ENCODE measurements at regions of chr16 and their contacts with region 1.

Region 1: DNA sequence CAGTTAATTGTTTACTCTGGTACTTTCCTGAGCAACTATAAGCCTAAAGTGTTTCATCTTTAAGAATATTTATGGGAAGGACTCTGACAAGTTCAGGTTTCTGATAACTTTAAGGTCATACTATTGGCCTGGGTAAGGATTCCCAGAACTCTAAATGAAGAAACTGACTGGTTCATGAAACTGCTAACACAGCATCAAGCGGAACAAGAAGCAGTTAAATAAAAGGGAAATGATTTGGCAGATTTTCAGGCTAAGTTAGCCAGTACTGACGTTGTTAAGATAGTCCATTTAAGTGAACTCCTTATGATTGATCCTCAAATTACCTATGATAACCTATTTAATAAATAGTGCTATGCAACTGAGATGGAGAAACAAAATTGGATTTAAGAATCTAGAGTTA is 101.6 kb upstream of the CES5A start:
- DNase-seq: no peak
- H3K4me3 ChIP-seq: no peak overlapping the region
- H3K27ac ChIP-seq: no peak overlapping the region
- H3K4me1 ChIP-seq: no peaks in the 10 kb centered on the region
- H3K27me3 ChIP-seq: no peaks in the 10 kb centered on the region
- CTCF ChIP-seq: no peak

Region 2: DNA sequence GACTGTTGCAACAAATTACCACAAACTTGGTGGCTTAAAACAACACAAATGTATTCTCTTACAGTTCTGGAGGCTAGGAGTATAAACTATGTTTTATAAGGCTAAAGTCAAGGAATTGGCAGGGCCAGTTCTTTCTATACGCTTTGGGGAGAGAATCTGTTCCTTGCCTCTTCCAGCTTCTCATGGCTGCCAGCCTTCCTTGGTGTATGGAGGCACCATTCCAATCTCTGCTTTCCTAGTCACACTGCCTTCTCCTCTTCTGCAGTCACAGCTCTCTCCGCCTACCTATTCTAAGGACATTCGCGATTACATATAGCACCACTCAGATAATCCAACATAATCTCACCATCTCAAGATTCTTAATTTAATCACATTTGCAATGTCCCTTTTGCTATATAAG is 74.1 kb after region 1 on chr16:
- CTCF ChIA-PET with region 1: no interaction called
- dilution Hi-C with region 1: loop called (anchors 5 kb)
- in situ Hi-C with region 1: no loop called
- intact Hi-C with region 1: no loop called
- DNase-seq: no peak
- H3K4me3 ChIP-seq: no peak overlapping the region
- H3K27ac ChIP-seq: no peak overlapping the region
- H3K4me1 ChIP-seq: no peaks in the 10 kb centered on the region
- H3K27me3 ChIP-seq: no peaks in the 10 kb centered on the region
- CTCF ChIP-seq: no peak